Stomach (tissue), 19 donors: ENCODE measurements at regions of chr1 and their contacts with region 1.

Region 1: DNA sequence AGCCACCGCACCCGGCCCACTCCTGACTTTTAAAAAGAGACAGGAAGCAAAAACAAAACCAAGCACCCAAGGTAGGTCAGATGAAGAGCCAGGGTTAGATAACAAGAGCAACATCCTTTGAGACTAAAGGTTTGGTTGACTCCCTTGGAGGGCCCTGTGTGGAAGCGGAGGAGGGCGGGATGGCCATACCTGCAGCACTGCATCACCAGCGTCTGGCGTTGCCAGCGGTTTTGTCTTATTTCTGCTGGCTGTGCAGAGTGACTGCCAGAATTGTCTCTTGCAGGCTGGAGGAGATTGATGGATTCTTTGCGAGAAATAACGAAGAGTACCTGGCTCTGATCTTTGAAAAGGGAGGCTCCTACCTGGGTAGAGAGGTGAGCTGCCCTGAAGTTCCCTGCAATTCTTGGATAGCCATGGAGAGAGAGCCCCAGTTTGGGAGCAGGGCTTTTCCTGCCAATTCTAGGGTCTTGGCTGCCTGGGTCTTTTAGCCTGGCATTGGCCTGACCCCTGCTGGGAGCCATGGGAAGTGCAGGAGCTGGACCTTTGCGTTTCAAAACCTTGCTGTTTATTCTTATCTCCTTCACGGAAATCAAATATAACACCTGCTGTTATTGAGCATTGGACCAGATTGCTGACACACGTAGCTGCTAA is 24.0 kb downstream of the QSOX1 start:
- DNase-seq: peak; percentile 78 to 87
- H3K4me3 ChIP-seq: no peak overlapping the region
- H3K27ac ChIP-seq: no peak overlapping the region
- H3K4me1 ChIP-seq: peaks cover 8 to 16% (median 11%) of the 10 kb centered on the region in 4 donors
- H3K27me3 ChIP-seq: no peaks in the 10 kb centered on the region
- CTCF ChIP-seq: peak in 5 of 7 experiments; percentile 82 to 98 (median 95)
- EP300 ChIP-seq: no peak
- POLR2A ChIP-seq: no peak

Region 2: DNA sequence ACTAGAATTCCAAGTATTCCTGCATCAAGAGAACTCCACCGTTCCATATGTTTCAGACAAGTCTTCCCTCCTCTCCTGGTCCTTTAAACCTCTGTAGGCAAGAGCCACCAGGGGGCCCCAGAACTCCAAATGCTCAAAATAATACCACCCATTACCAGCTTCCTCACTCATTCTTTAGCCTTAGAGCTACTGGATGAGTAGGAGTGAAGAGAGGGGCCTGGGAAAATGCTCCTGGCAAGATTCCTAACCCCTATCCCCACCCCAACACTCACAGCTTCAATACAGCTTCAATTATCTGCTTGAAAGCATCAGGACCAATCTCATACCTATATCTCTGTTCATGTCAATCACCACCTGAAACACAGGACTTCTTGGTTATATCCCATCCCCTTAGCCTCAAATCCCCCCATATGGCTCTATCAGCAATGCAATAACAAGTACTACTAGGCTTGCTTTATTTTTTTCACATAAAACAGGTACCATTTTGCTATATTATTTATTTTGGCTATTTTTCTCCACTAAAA is 310.8 kb before region 1 on chr1:
- intact Hi-C with region 1: loop called (anchors 10 kb)
- DNase-seq: peak; percentile 65 to 78
- H3K4me3 ChIP-seq: no peak overlapping the region
- H3K27ac ChIP-seq: no peak overlapping the region
- H3K4me1 ChIP-seq: peaks cover 8 to 42% (median 25%) of the 10 kb centered on the region in 4 donors
- H3K27me3 ChIP-seq: no peaks in the 10 kb centered on the region
- CTCF ChIP-seq: peak in 4 of 7 experiments; percentile 22 to 66 (median 49)
- EP300 ChIP-seq: no peak
- POLR2A ChIP-seq: no peak